Breast epithelium (tissue), 4 donors: ENCODE measurements at regions of chr3 and their contacts with region 1.

Region 1: GRCh38 chr3:45892161-45892560 is 5.8 kb downstream of the CCR9 start:
- DNase-seq: no peak
- H3K4me3 ChIP-seq: no peak overlapping the region
- H3K27ac ChIP-seq: no peak overlapping the region
- H3K4me1 ChIP-seq: no peaks in the 10 kb centered on the region
- H3K27me3 ChIP-seq: no peaks in the 10 kb centered on the region
- CTCF ChIP-seq: no peak
- POLR2A ChIP-seq: no peak

Region 2: GRCh38 chr3:45832691-45833090 is 59.5 kb before region 1 on chr3:
- intact Hi-C with region 1: loop called (anchors 2 kb)
- DNase-seq: no peak
- H3K4me3 ChIP-seq: no peak overlapping the region
- H3K27ac ChIP-seq: no peak overlapping the region
- H3K4me1 ChIP-seq: no peaks in the 10 kb centered on the region
- H3K27me3 ChIP-seq: no peaks in the 10 kb centered on the region
- CTCF ChIP-seq: no peak
- POLR2A ChIP-seq: no peak

Region 3: GRCh38 chr3:45852828-45853227 is 39.3 kb before region 1 on chr3:
- intact Hi-C with region 1: no loop called
- DNase-seq: no peak
- H3K4me3 ChIP-seq: no peak overlapping the region
- H3K27ac ChIP-seq: no peak overlapping the region
- H3K4me1 ChIP-seq: no peaks in the 10 kb centered on the region
- H3K27me3 ChIP-seq: no peaks in the 10 kb centered on the region
- CTCF ChIP-seq: no peak
- POLR2A ChIP-seq: no peak

Region 4: GRCh38 chr3:45906681-45907407 is 14.7 kb after region 1 on chr3:
- intact Hi-C with region 1: no loop called
- DNase-seq: no peak
- H3K4me3 ChIP-seq: no peak overlapping the region
- H3K27ac ChIP-seq: no peak overlapping the region
- H3K4me1 ChIP-seq: no peaks in the 10 kb centered on the region
- H3K27me3 ChIP-seq: no peaks in the 10 kb centered on the region
- CTCF ChIP-seq: no peak
- POLR2A ChIP-seq: no peak